Heart right ventricle (tissue), 16 donors: ENCODE measurements at regions of chr21 and their contacts with region 1.

Region 1: GRCh38 chr21:33698087-33698860 is 56.0 kb downstream of the ITSN1 start:
- DNase-seq: no peak
- ATAC-seq: peak in 2 of 8 donors; percentile 65 to 80
- H3K4me3 ChIP-seq: no peak overlapping the region
- H3K27ac ChIP-seq: peak overlapping the region in 3 of 10 donors; percentile 25 to 45 (median 38)
- H3K4me1 ChIP-seq: peaks cover 3 to 51% (median 29%) of the 10 kb centered on the region in 9 donors
- H3K27me3 ChIP-seq: no peaks in the 10 kb centered on the region
- CTCF ChIP-seq: no peak

Region 2: DNA sequence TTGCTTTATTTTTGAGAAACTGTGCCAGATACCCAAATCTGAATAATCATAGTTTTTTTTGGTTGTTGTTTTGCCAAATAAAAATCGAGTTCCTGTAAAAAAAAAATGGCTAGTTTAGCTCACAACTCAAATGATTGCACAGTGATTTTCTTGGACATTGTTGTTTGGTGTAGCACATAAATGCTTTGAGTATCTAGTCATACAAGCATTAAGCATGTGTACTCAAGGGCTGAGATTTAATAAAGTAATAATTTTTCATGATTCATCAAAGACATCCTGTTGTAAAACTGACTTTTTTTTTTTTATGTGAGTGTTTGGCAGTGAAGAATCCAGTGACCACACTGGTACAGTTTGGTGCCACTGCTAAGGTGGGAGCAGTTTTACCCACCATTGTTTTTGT is 37.1 kb before region 1 on chr21:
- intact Hi-C with region 1: loop called in 1 of 10 experiments (anchors 5 kb)
- DNase-seq: no peak
- ATAC-seq: no peak
- H3K4me3 ChIP-seq: no peak overlapping the region
- H3K27ac ChIP-seq: no peak overlapping the region
- H3K4me1 ChIP-seq: peaks cover 0 to 49% (median 36%) of the 10 kb centered on the region in 9 donors
- H3K27me3 ChIP-seq: no peaks in the 10 kb centered on the region
- CTCF ChIP-seq: no peak

Region 3: GRCh38 chr21:33751120-33751519 is 52.8 kb after region 1 on chr21:
- intact Hi-C with region 1: no loop called
- DNase-seq: no peak
- ATAC-seq: peak in 6 of 8 donors; percentile 20 to 60 (median 36)
- H3K4me3 ChIP-seq: no peak overlapping the region
- H3K27ac ChIP-seq: peak overlapping the region in 5 of 10 donors; percentile 17 to 58 (median 44)
- H3K4me1 ChIP-seq: peaks cover 0 to 38% (median 22%) of the 10 kb centered on the region in 9 donors
- H3K27me3 ChIP-seq: no peaks in the 10 kb centered on the region
- CTCF ChIP-seq: no peak

Region 4: GRCh38 chr21:35309316-35309715 is 1611.0 kb after region 1 on chr21:
- intact Hi-C with region 1: loop called in 1 of 10 experiments (anchors 5 kb)
- DNase-seq: no peak
- ATAC-seq: no peak
- H3K4me3 ChIP-seq: no peak overlapping the region
- H3K27ac ChIP-seq: no peak overlapping the region
- H3K4me1 ChIP-seq: no peaks in the 10 kb centered on the region
- H3K27me3 ChIP-seq: peaks cover 0 to 6% (median 0%) of the 10 kb centered on the region in 7 donors
- CTCF ChIP-seq: no peak